HEK293 (cell line): ENCODE measurements at regions of chr12 and their contacts with region 1.

Region 1: DNA sequence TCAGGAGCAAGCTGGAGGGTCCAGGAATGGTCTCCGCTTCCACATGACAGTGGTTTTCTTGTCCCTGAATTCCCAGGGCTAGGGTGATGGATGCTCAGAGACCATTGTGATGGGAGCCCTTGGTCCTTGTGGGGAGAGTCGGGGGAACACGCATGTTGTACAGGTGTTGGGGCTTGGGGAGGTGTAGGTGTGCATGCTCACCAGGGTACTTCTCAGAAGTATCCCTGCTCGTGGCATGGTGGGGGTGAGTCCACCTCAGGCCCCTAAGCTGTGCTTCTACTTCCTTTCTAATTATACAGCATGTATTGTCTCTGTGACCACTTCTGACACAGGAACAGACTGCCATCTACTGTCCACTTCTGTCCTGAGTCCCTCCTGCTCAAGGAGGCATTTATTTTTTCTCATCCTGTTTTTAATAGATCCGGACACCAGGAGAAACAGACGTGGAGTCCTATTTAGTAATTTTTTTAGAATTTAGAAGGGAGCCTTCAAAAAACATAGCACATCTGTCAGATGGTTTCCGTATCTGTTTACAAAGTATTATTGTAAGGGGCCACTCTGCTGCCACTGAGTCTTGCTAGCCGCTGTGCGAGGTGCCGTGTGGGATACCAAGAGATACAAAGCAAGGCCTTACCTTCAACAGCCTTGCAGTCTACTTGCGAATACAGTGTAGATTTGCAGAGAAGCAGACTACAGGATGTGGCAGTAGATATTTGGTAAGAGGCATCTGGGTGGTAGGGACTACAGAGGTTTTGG is 10.5 kb downstream of the NTF3 start:
- H3K4me3 ChIP-seq: no peak overlapping the region
- H3K27ac ChIP-seq: no peak overlapping the region
- H3K4me1 ChIP-seq: no peaks in the 10 kb centered on the region
- CTCF ChIP-seq: peak; percentile 54

Region 2: GRCh38 chr12:5171701-5172100 is 270.7 kb before region 1 on chr12:
- CTCF ChIA-PET with region 1: interaction called, 22 read pairs
- POLR2A ChIA-PET with region 1: no interaction called
- H3K4me3 ChIP-seq: no peak overlapping the region
- H3K27ac ChIP-seq: no peak overlapping the region
- H3K4me1 ChIP-seq: no peaks in the 10 kb centered on the region
- CTCF ChIP-seq: peak; percentile 45; the same call in 1 of the 2 replicates

Region 3: DNA sequence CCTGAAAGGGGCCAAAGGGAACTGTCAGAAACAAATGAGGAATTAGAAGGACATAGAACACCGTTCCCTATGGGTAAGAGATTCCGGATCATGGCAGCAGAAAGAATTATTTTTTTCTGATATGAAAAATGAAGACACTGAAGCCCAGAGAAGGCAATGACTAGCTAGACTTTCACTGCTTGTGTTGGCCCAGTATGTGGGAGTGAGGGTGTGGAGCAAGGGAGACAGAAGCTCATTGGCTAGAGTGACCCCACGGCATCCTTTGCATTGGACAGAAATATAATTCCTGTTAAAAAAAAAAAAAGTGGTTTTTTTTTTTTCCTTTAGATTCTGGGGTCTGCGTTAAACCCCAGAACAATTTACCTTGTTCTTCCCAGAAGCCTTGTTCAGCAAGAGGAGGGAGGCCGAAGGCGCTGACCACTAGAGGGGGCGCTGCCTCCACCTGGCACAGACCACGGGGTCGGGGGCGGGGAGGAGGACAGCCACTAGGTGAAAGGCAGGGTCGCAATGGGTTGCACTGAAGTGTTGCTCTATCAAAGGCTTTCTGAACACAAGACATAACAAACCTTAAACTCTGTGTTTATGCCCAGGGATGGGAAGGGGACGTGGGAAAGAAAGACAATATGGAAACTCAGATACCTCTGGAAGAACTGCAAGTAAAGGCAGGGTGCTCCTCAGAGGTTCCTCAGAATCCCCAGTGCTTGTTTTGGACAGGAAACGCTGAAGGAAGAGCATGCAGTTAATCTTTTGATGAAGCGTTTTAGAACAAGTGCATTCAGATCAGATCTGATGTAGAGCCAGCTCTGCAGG is 241.9 kb before region 1 on chr12:
- CTCF ChIA-PET with region 1: interaction called, 15 read pairs
- POLR2A ChIA-PET with region 1: no interaction called
- H3K4me3 ChIP-seq: no peak overlapping the region
- H3K27ac ChIP-seq: no peak overlapping the region
- H3K4me1 ChIP-seq: no peaks in the 10 kb centered on the region
- CTCF ChIP-seq: peak; percentile 72

Region 4: GRCh38 chr12:5335069-5335468 is 107.4 kb before region 1 on chr12:
- CTCF ChIA-PET with region 1: no interaction called
- POLR2A ChIA-PET with region 1: no interaction called
- H3K4me3 ChIP-seq: no peak overlapping the region
- H3K27ac ChIP-seq: no peak overlapping the region
- H3K4me1 ChIP-seq: no peaks in the 10 kb centered on the region
- CTCF ChIP-seq: no peak